CD4-positive, alpha-beta T cell (primary cell): ENCODE measurements at regions of chr4 and their contacts with region 1.

Region 1: DNA sequence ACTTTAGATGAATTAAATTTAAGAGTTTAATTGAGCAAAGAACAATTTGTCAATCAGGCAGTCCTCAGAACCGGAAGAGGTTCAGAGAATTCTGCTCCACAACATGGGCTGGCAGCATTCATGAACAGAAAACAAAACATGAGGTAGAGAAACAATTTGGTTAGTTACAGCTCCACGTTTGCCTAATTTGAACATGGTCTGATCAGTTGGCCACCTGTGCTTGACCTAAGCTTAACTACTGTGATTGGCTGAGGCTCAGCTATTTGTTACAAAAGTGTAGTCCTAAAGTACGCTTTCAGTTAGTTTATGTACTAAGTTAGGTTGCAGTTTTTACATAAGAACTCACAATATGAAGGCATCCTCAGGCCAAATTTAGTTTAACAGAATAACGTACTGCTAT is 258.6 kb downstream of the ADAM29 start:
- DNase-seq: no peak
- ATAC-seq: no peak
- H3K4me3 ChIP-seq: no peak overlapping the region
- H3K4me3 Mint-ChIP-seq: no peak overlapping the region
- H3K27ac ChIP-seq: no peak overlapping the region
- H3K27ac Mint-ChIP-seq: no peak overlapping the region
- H3K4me1 ChIP-seq: no peaks in the 10 kb centered on the region
- H3K4me1 Mint-ChIP-seq: no peaks in the 10 kb centered on the region
- H3K27me3 ChIP-seq: no peaks in the 10 kb centered on the region
- H3K27me3 Mint-ChIP-seq: no peaks in the 10 kb centered on the region
- CTCF ChIP-seq: no peak

Region 2: GRCh38 chr4:174928174-174928573 is 248.5 kb before region 1 on chr4:
- CTCF ChIA-PET with region 1: no interaction called
- POLR2A ChIA-PET with region 1: no interaction called
- intact Hi-C with region 1: no loop called
- DNase-seq: peak in 2 of 14 experiments; percentile 14 to 15
- ATAC-seq: no peak
- H3K4me3 ChIP-seq: no peak overlapping the region
- H3K4me3 Mint-ChIP-seq: no peak overlapping the region
- H3K27ac ChIP-seq: no peak overlapping the region
- H3K27ac Mint-ChIP-seq: no peak overlapping the region
- H3K4me1 ChIP-seq: no peaks in the 10 kb centered on the region
- H3K4me1 Mint-ChIP-seq: no peaks in the 10 kb centered on the region
- H3K27me3 ChIP-seq: no peaks in the 10 kb centered on the region
- H3K27me3 Mint-ChIP-seq: no peaks in the 10 kb centered on the region
- CTCF ChIP-seq: no peak

Region 3: GRCh38 chr4:175190654-175191053 is 13.9 kb after region 1 on chr4:
- CTCF ChIA-PET with region 1: no interaction called
- POLR2A ChIA-PET with region 1: no interaction called
- intact Hi-C with region 1: no loop called
- DNase-seq: no peak
- ATAC-seq: no peak
- H3K4me3 ChIP-seq: no peak overlapping the region
- H3K4me3 Mint-ChIP-seq: no peak overlapping the region
- H3K27ac ChIP-seq: no peak overlapping the region
- H3K27ac Mint-ChIP-seq: no peak overlapping the region
- H3K4me1 ChIP-seq: no peaks in the 10 kb centered on the region
- H3K4me1 Mint-ChIP-seq: no peaks in the 10 kb centered on the region
- H3K27me3 ChIP-seq: no peaks in the 10 kb centered on the region
- H3K27me3 Mint-ChIP-seq: no peaks in the 10 kb centered on the region
- CTCF ChIP-seq: no peak

Region 4: DNA sequence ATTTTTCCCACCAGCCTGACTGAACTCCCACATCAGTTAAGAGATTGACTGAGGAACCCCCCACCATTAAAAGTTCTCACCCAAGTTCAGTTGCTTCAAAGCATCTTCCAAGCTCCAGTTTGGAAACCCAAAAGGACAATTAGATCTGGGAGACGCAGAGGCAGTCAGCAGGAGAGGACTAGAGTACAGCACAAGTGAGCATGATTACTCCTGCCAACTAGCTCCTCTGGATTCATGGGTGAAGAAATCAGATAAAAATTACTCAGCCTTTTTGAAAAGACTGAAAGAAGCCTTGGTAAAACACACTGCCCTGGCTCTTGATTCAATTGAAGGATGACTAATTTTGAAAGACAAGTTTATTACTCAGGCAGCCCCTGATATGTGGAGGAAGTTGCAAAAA is 38.9 kb after region 1 on chr4:
- CTCF ChIA-PET with region 1: no interaction called
- POLR2A ChIA-PET with region 1: no interaction called
- intact Hi-C with region 1: loop called in 1 of 2 experiments (anchors 1 kb)
- DNase-seq: no peak
- ATAC-seq: no peak
- H3K4me3 ChIP-seq: no peak overlapping the region
- H3K4me3 Mint-ChIP-seq: no peak overlapping the region
- H3K27ac ChIP-seq: no peak overlapping the region
- H3K27ac Mint-ChIP-seq: no peak overlapping the region
- H3K4me1 ChIP-seq: no peaks in the 10 kb centered on the region
- H3K4me1 Mint-ChIP-seq: no peaks in the 10 kb centered on the region
- H3K27me3 ChIP-seq: no peaks in the 10 kb centered on the region
- H3K27me3 Mint-ChIP-seq: no peaks in the 10 kb centered on the region
- CTCF ChIP-seq: no peak

Region 5: DNA sequence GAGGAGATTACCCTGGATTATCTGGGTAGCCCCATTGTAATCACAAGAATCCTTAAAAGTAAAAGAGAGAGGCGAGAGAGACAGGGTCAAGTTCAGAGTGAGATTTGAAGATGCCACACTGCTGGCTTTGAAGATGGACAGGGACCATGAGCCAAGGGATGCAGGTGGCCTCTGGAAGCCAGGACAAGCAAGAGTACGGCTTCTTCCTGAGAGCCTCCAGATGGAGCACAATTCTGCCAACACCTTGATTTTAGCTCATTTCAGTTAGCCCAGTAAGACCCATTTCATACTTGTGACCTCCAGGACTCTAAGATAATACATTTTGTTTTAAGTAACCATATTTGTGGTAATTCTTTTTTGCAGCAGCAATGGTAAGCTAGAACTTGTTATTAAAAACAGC is 515.1 kb after region 1 on chr4:
- CTCF ChIA-PET with region 1: no interaction called
- POLR2A ChIA-PET with region 1: no interaction called
- intact Hi-C with region 1: no loop called
- DNase-seq: no peak
- ATAC-seq: no peak
- H3K4me3 ChIP-seq: no peak overlapping the region
- H3K4me3 Mint-ChIP-seq: no peak overlapping the region
- H3K27ac ChIP-seq: no peak overlapping the region
- H3K27ac Mint-ChIP-seq: no peak overlapping the region
- H3K4me1 ChIP-seq: no peaks in the 10 kb centered on the region
- H3K4me1 Mint-ChIP-seq: no peaks in the 10 kb centered on the region
- H3K27me3 ChIP-seq: no peaks in the 10 kb centered on the region
- H3K27me3 Mint-ChIP-seq: no peaks in the 10 kb centered on the region
- CTCF ChIP-seq: no peak